SK-N-SH (cell line): ENCODE measurements at regions of chr1 and their contacts with region 1.

Region 1: DNA sequence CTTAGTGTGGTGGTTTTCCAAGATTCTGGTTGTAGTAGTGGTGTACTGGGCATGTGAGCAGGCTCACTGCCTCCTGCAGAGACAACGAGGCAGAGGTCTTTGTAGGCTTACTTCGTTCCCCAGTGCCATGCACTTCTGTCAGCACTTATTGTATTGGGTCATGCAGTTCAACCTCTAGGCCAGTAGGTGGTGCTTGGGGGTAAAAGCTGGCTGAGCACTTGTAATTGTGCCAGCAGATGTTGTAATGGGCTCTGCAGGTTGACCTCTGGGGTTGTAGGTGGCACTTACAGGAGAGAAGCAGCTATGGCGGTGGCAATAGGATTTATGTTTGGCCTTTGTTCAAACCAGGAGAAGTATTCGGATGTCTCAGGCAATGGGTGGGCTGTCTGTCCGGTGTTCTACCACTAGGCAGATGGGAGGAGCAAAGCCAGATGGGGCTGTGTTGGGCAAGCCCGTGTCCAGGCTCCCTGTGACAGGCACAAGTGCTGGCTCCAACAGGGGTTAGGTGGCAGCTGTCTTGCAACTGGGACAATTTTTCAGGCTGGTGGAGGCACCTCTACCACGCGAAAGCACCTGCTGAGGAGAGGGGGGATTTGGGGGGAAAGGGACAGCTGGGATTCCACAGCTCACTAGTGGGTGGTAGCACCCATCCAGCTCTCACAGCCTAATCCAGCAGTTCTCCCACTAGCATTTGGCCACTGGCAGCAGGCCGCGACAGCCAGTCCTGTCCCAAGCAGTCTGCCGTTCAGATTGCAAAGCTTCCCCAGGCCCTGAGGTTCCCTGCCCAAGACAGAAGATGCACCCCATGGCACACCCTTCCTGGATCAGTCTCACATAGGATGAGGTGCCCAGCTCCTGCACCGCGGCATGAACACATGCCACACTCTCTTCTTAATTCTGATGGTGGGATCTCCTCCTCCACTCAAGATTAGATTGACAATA is 274.5 kb downstream of the CTH start:
- DNase-seq: peak; percentile 57
- H3K4me3 ChIP-seq: no peak overlapping the region
- H3K27ac ChIP-seq: no peak overlapping the region
- H3K4me1 ChIP-seq: no peaks in the 10 kb centered on the region
- H3K27me3 ChIP-seq: no peaks in the 10 kb centered on the region
- CTCF ChIP-seq: peak; percentile 86
- EP300 ChIP-seq: no peak
- RAD21 ChIP-seq: peak; percentile 85

Region 2: GRCh38 chr1:70714144-70714543 is 28.6 kb after region 1 on chr1:
- CTCF ChIA-PET with region 1: interaction called, 12 read pairs
- POLR2A ChIA-PET with region 1: no interaction called
- DNase-seq: no peak
- H3K4me3 ChIP-seq: no peak overlapping the region
- H3K27ac ChIP-seq: no peak overlapping the region
- H3K4me1 ChIP-seq: peaks cover 0 to 23% of the 10 kb centered on the region in 2 experiments; a peak in 2 of 4 replicates
- H3K27me3 ChIP-seq: no peaks in the 10 kb centered on the region
- CTCF ChIP-seq: peak; percentile 21; the same call in 1 of the 2 replicates
- EP300 ChIP-seq: no peak
- RAD21 ChIP-seq: peak; percentile 34

Region 3: GRCh38 chr1:71049951-71050598 is 364.5 kb after region 1 on chr1:
- CTCF ChIA-PET with region 1: interaction called, 40 read pairs
- POLR2A ChIA-PET with region 1: no interaction called
- DNase-seq: peak; percentile 77
- H3K4me3 ChIP-seq: no peak overlapping the region
- H3K27ac ChIP-seq: no peak overlapping the region
- H3K4me1 ChIP-seq: peaks cover 3 to 11% of the 10 kb centered on the region in 2 experiments; a peak in 1 of 4 replicates
- H3K27me3 ChIP-seq: no peaks in the 10 kb centered on the region
- CTCF ChIP-seq: peak; percentile 81
- EP300 ChIP-seq: no peak
- RAD21 ChIP-seq: peak; percentile 98